Astrocyte of the cerebellum (primary cell): ENCODE measurements at regions of chr5 and their contacts with region 1.

Region 1: DNA sequence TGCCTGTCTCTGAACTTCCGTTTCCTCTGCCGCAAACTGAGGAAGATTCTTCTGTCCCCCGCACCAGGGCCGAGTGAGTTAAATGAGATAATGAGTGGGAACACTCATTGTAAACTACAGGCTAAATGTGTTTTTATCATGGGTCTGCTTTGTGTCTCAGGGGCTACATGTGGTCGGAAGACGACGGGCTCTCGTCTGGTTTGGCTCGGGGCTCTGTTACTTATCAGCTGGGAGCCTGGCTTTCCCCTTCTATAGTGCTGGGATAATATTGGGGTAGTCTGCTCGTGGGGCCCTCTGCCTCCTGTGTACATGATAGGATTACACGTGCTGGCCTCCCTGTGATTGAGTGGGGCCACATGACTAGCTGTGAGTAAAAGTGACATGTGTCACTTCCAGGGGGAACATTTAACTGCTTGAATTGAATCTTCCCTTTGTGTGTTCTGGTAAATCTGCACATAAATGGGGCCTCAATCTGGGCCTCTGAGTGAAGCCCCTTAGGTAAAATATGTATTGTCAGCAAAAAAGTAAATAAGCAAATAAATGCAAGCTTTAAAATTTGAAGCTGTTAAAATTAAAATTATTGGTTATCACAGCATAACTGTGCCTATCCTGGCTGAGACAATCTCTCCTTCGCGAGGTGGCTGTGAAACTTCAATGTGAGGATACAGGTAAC is 86.9 kb upstream of the SH3PXD2B start:
- DNase-seq: no peak
- H3K4me3 ChIP-seq: no peak overlapping the region
- CTCF ChIP-seq: no peak

Region 2: GRCh38 chr5:172594867-172595466 is 53.7 kb after region 1 on chr5:
- in situ Hi-C with region 1: loop called (anchors 5 kb)
- DNase-seq: no peak
- H3K4me3 ChIP-seq: no peak overlapping the region
- CTCF ChIP-seq: no peak